Transverse colon (tissue), 4 donors: ENCODE measurements at regions of chr4 and their contacts with region 1.

Region 1: DNA sequence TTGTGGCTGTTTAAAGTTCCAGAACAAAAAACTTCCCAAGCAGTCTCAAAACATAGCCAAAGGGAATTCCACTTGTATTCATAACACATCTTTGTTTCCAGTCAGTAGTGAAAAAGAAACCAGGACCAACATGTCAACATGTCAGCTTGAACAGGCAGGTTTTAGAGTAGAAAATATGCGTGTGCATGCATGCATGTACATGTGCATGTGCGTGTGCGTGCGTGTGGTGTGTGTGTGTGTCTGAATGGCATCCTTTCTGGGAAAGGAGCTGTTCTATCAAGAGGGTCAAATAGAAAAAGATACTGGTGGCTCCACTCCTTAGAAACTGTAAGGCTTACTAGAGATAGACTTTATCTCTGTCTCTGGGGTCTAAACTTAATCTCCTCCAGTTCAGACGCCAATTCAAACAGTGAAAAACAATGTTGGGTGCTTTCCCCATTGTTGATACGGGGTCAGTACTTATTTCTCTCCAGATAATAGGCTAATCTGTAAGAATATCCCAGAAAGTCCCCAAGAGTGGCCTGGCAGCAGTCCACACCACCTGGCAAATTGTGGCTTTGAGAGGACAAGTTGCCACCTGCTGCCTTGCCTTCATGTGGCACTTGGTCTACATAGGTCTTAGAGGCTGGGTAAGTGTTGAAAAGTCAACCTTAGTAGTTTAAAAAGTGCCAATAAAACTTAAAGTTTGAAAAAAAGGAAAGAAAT is 110.4 kb downstream of the SCD5 start:
- DNase-seq: no peak
- H3K4me3 ChIP-seq: no peak overlapping the region
- H3K27ac ChIP-seq: no peak overlapping the region
- H3K4me1 ChIP-seq: no peaks in the 10 kb centered on the region
- H3K27me3 ChIP-seq: no peaks in the 10 kb centered on the region
- CTCF ChIP-seq: no peak
- EP300 ChIP-seq: no peak
- POLR2A ChIP-seq: no peak

Region 2: GRCh38 chr4:81142744-81143143 is 1545.5 kb before region 1 on chr4:
- in situ Hi-C with region 1: no loop called
- intact Hi-C with region 1: loop called (anchors 5 kb)
- DNase-seq: peak; percentile 56
- H3K4me3 ChIP-seq: no peak overlapping the region
- H3K27ac ChIP-seq: peak overlapping the region in 2 of 4 donors; percentile 22 to 53
- H3K4me1 ChIP-seq: peaks cover 0 to 12% (median 5%) of the 10 kb centered on the region in 4 donors
- H3K27me3 ChIP-seq: no peaks in the 10 kb centered on the region
- CTCF ChIP-seq: no peak
- EP300 ChIP-seq: no peak
- POLR2A ChIP-seq: no peak